Pancreas (tissue), 10 donors: ENCODE measurements at regions of chr2 and their contacts with region 1.

Region 1: GRCh38 chr2:68121873-68122679 is 35.6 kb upstream of the PNO1 start:
- DNase-seq: peak; percentile 70 to 98 (median 88)
- ATAC-seq: peak; percentile 85 to 97 (median 94)
- H3K4me3 ChIP-seq: no peak overlapping the region
- H3K27ac ChIP-seq: no peak overlapping the region
- H3K4me1 ChIP-seq: peaks cover 0 to 3% (median 0%) of the 10 kb centered on the region in 3 donors
- H3K27me3 ChIP-seq: no peaks in the 10 kb centered on the region
- CTCF ChIP-seq: peak; percentile 86 to 94 (median 92)

Region 2: DNA sequence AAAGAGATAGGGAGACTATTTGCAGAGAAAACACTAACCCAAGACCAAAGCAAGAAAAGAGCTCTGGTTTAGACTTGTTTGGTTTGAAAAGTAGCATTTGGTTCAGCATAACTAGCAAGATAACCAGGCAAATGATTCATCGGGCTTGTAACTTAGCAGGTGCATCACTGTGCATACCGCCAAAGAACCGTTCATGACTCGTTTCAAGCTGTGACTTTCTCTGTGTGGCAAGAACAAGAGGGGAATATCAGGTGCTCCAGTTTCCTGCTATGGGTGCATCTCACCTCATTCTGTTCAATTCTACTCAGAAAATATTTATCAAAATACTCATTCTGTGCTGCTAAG is 480.1 kb before region 1 on chr2:
- intact Hi-C with region 1: no loop called
- DNase-seq: no peak
- ATAC-seq: peak in 3 of 4 donors; percentile 55 to 63 (median 57)
- H3K4me3 ChIP-seq: no peak overlapping the region
- H3K27ac ChIP-seq: no peak overlapping the region
- H3K4me1 ChIP-seq: peaks cover 0 to 7% (median 0%) of the 10 kb centered on the region in 3 donors
- H3K27me3 ChIP-seq: no peaks in the 10 kb centered on the region
- CTCF ChIP-seq: no peak

Region 3: GRCh38 chr2:68044099-68044498 is 78.0 kb before region 1 on chr2:
- intact Hi-C with region 1: no loop called
- DNase-seq: no peak
- ATAC-seq: no peak
- H3K4me3 ChIP-seq: no peak overlapping the region
- H3K27ac ChIP-seq: no peak overlapping the region
- H3K4me1 ChIP-seq: peaks cover 0 to 11% (median 0%) of the 10 kb centered on the region in 3 donors
- H3K27me3 ChIP-seq: no peaks in the 10 kb centered on the region
- CTCF ChIP-seq: no peak

Region 4: GRCh38 chr2:68282811-68283418 is 160.8 kb after region 1 on chr2:
- intact Hi-C with region 1: loop called in 2 of 3 experiments (anchors 5 to 10 kb)
- DNase-seq: no peak
- ATAC-seq: peak in 3 of 4 donors; percentile 75 to 79 (median 78)
- H3K4me3 ChIP-seq: no peak overlapping the region
- H3K27ac ChIP-seq: no peak overlapping the region
- H3K4me1 ChIP-seq: peaks cover 0 to 5% (median 0%) of the 10 kb centered on the region in 3 donors
- H3K27me3 ChIP-seq: no peaks in the 10 kb centered on the region
- CTCF ChIP-seq: peak; percentile 22 to 73 (median 43)

Region 5: GRCh38 chr2:68441179-68441993 is 319.3 kb after region 1 on chr2:
- intact Hi-C with region 1: loop called in 1 of 3 experiments (anchors 10 kb)
- DNase-seq: peak in 5 of 6 donors; percentile 63 to 77 (median 69)
- ATAC-seq: peak; percentile 83 to 95 (median 84)
- H3K4me3 ChIP-seq: no peak overlapping the region
- H3K27ac ChIP-seq: peak overlapping the region in 1 of 4 donors; percentile 11
- H3K4me1 ChIP-seq: peaks cover 7 to 12% (median 7%) of the 10 kb centered on the region in 3 donors
- H3K27me3 ChIP-seq: no peaks in the 10 kb centered on the region
- CTCF ChIP-seq: peak; percentile 73 to 84 (median 78)